PC-3 (cell line): ENCODE measurements at regions of chr5 and their contacts with region 1.

Region 1: GRCh38 chr5:121581588-121581987 is 270.1 kb upstream of the FTMT start:
- DNase-seq: no peak
- ATAC-seq: no peak
- H3K4me3 ChIP-seq: no peak overlapping the region
- H3K27ac ChIP-seq: no peak overlapping the region
- H3K4me1 ChIP-seq: no peaks in the 10 kb centered on the region
- H3K27me3 ChIP-seq: no peaks in the 10 kb centered on the region
- CTCF ChIP-seq: no peak

Region 2: GRCh38 chr5:121138495-121138907 is 443.1 kb before region 1 on chr5:
- CTCF ChIA-PET with region 1: no interaction called
- POLR2A ChIA-PET with region 1: no interaction called
- intact Hi-C with region 1: loop called (anchors 10 kb)
- DNase-seq: peak; percentile 60
- ATAC-seq: peak; percentile 74
- H3K4me3 ChIP-seq: no peak overlapping the region
- H3K27ac ChIP-seq: no peak overlapping the region
- H3K4me1 ChIP-seq: peaks cover 15% of the 10 kb centered on the region
- H3K27me3 ChIP-seq: no peaks in the 10 kb centered on the region
- CTCF ChIP-seq: no peak

Region 3: GRCh38 chr5:121525731-121526130 is 55.9 kb before region 1 on chr5:
- CTCF ChIA-PET with region 1: no interaction called
- POLR2A ChIA-PET with region 1: no interaction called
- intact Hi-C with region 1: no loop called
- DNase-seq: peak; percentile 22
- ATAC-seq: no peak
- H3K4me3 ChIP-seq: no peak overlapping the region
- H3K27ac ChIP-seq: no peak overlapping the region
- H3K4me1 ChIP-seq: no peaks in the 10 kb centered on the region
- H3K27me3 ChIP-seq: no peaks in the 10 kb centered on the region
- CTCF ChIP-seq: no peak